PC-3 (cell line): ENCODE measurements at regions of chr22 and their contacts with region 1.

Region 1: DNA sequence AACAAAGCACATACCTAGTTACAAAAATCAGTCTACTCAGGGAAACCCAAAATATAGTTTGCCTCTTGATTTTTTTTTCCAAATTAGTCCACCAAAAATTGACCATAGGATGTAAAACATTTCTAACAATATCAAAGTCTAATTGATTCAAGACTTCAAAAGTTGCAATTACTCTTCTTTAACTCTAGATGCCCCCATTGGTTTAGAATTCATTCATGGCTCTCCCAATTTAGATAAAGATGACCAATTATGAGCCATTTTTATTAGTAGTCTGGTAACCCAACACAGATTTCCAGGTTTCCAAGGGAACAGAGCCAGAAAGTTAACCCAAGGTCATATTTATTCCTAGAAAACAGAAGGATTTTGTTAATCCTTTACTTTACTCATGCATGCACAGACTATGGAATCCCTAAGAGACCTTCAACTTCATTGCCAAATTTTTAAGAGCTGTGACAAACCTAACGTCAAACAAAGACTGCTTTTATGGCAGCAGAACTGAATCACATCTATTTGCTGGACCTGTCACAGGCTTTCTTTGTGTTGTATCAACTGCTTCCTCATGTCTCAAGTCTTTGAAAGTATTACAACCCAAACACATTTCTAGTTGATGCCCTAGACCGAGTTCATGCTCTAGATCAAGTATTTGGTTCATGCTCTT is 55.3 kb downstream of the C22orf42 start:
- DNase-seq: peak; percentile 37
- ATAC-seq: peak; percentile 62
- H3K4me3 ChIP-seq: no peak overlapping the region
- H3K27ac ChIP-seq: no peak overlapping the region
- H3K4me1 ChIP-seq: no peaks in the 10 kb centered on the region
- H3K27me3 ChIP-seq: peaks cover 12% of the 10 kb centered on the region; the same call in 1 of the 2 replicates
- CTCF ChIP-seq: peak; percentile 68

Region 2: DNA sequence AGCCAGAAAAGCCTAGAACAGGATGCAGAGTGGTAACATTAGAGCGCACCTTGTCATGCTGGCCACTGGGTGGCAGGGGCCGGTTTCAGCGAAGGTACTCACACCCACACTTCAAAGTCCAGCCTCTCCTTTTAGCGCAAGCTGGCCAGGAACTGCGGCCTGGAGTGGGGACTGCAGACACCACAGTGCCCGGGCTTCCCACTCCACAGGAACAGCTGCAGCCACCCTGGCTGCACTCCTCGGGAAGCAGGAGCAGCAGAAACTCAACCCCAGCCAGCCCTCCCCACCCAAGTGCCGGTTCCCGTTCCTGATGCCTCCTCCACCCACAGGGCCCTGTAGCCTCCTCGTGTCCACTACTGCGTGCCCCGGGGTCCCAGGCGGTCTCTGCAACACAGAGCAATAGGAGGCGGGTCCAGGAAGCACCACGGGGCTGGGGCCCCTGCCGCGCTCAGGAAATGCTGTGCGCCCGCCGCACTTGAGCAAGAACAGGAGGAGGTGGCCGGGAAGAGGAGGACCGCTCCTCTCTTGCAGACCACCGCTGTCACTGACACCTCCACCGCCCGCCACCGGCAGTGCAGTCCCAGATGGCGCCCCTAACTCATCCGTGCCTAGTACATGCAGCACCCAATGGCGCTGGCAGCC is 98.9 kb after region 1 on chr22:
- CTCF ChIA-PET with region 1: interaction called, 4 read pairs
- POLR2A ChIA-PET with region 1: no interaction called
- intact Hi-C with region 1: loop called (anchors 5 kb)
- DNase-seq: peak; percentile 58
- ATAC-seq: peak; percentile 91
- H3K4me3 ChIP-seq: no peak overlapping the region
- H3K27ac ChIP-seq: no peak overlapping the region
- H3K4me1 ChIP-seq: no peaks in the 10 kb centered on the region
- H3K27me3 ChIP-seq: no peaks in the 10 kb centered on the region
- CTCF ChIP-seq: peak; percentile 58

Region 3: DNA sequence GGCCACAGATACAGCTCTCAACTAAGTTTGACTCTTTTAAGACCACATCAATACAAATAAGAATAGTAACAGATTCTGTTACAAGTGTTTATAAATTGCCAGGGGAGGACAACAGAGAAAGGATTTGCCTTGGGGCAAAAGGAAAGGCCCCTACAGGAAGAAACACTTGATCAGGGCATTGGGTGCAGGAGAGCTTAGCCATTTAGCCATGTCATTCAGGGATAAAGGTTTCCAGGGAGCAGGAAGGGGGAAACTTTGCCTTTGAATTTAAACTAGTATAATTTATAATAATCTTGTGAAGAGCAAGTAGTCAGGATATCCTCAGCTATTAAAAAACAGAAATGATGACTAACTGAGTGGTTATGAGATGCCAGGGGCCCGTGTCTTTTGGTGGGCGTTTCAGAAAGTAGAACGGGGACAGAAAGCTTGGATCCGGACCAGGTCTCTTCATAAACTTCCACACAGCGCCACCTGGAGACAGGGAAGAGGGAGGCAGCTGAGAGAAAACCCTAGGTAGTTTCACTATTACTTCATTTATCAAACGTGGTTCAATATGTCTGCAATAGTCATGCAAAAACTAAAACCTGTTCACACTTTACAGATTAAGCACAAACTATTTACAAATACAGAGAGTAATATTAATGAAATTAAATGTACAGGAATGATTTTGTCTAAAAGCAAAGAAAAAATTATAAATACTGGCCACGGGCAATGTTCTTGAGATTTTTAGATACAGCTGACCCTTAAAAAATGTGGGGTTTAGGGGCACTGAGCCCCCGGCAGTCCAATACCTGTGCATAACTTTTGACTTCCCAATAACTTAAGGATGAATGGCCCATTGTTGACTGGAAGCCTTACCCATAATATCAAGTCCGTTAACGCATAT is 162.3 kb after region 1 on chr22:
- CTCF ChIA-PET with region 1: no interaction called
- POLR2A ChIA-PET with region 1: no interaction called
- intact Hi-C with region 1: loop called (anchors 1 kb)
- DNase-seq: peak; percentile 67
- ATAC-seq: peak; percentile 40; the same call in 1 of the 2 replicates
- H3K4me3 ChIP-seq: no peak overlapping the region
- H3K27ac ChIP-seq: no peak overlapping the region
- H3K4me1 ChIP-seq: no peaks in the 10 kb centered on the region
- H3K27me3 ChIP-seq: peaks cover 8% of the 10 kb centered on the region; the same call in 1 of the 2 replicates
- CTCF ChIP-seq: peak; percentile 74